ENCODE measurements at regions of chr5 and their contacts with region 1.

Region 1: GRCh38 chr5:171999877-172000276 is 6.6 kb downstream of the FBXW11 start:
- DNase-seq: no peak
- ATAC-seq: no peak
- H3K4me3 ChIP-seq: no peak overlapping the region
- H3K27ac ChIP-seq: no peak overlapping the region
- H3K4me1 ChIP-seq: peaks cover 13 to 83% (median 68%) of the 10 kb centered on the region in 9 donors
- H3K27me3 ChIP-seq: no peaks in the 10 kb centered on the region
- CTCF ChIP-seq: no peak

Region 2: GRCh38 chr5:171957591-171958251 is 42.2 kb before region 1 on chr5:
- intact Hi-C with region 1: loop called in 1 of 10 experiments (anchors 5 kb)
- DNase-seq: no peak
- ATAC-seq: peak in 6 of 8 donors; percentile 32 to 62 (median 50)
- H3K4me3 ChIP-seq: no peak overlapping the region
- H3K27ac ChIP-seq: peak overlapping the region in 3 of 10 donors; percentile 17 to 26 (median 22)
- H3K4me1 ChIP-seq: peaks cover 21 to 93% (median 78%) of the 10 kb centered on the region in 9 donors
- H3K27me3 ChIP-seq: no peaks in the 10 kb centered on the region
- CTCF ChIP-seq: no peak

Region 3: GRCh38 chr5:172223901-172224873 is 224.3 kb after region 1 on chr5:
- intact Hi-C with region 1: no loop called
- DNase-seq: no peak
- ATAC-seq: no peak
- H3K4me3 ChIP-seq: no peak overlapping the region
- H3K27ac ChIP-seq: no peak overlapping the region
- H3K4me1 ChIP-seq: no peaks in the 10 kb centered on the region
- H3K27me3 ChIP-seq: no peaks in the 10 kb centered on the region
- CTCF ChIP-seq: no peak

Measured in heart right ventricle (tissue), 16 donors.